ENCODE measurements at regions of chr15 and their contacts with region 1.

Region 1: DNA sequence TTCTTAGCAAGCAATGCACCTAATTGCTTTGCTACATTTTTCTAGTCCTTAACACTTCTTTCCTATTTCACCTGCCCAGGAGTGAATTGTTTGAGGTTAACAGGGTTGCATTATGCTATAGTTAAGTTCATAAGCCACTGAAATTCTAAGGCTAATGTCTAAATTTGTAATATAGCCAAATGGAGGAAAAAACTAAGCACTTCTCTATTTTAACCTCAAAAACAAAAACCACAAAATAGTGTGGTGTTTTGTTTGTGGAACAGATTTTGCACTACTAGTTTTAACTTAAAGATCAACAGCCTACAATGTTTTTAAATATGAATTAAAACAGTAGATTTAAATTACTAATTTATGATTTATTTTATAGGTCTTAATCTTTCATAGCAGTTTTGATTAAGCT is 5.5 kb downstream of the ATOSA start:
- DNase-seq: no peak
- H3K4me3 ChIP-seq: no peak overlapping the region
- H3K4me3 Mint-ChIP-seq: peak overlapping the region in 3 of 7 donors; percentile 2 to 24 (median 7)
- H3K27ac ChIP-seq: no peak overlapping the region
- H3K27ac Mint-ChIP-seq: peak overlapping the region in 1 of 8 donors; percentile 43
- H3K4me1 ChIP-seq: peaks cover 18% of the 10 kb centered on the region
- H3K4me1 Mint-ChIP-seq: peaks cover 44 to 83% (median 82%) of the 10 kb centered on the region in 3 donors
- H3K27me3 ChIP-seq: no peaks in the 10 kb centered on the region
- H3K27me3 Mint-ChIP-seq: peaks cover 0 to 5% of the 10 kb centered on the region in 2 donors

Region 2: DNA sequence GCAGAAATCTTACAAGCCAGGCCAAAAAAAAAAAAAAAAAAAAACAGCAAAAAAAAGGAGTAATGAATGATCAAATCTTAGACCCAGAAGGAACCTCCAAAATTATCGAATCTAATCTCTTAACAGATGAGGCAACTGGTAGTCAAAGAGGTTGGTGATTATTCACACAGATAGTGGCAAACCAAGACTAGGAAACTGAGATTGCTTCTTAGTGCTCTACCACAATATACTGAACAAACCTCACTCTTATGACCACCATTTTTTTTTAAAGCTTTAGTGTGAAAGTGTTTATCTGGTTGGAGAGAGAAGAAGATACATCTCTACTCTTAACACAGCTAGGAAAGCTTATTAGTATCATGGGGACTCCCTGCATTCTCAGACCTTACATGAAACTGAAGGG is 11.8 kb before region 1 on chr15:
- CTCF ChIA-PET with region 1: interaction called, 5 read pairs
- POLR2A ChIA-PET with region 1: interaction called, 14 read pairs
- DNase-seq: no peak
- H3K4me3 ChIP-seq: no peak overlapping the region
- H3K4me3 Mint-ChIP-seq: no peak overlapping the region
- H3K27ac ChIP-seq: no peak overlapping the region
- H3K27ac Mint-ChIP-seq: peak overlapping the region in 6 of 8 donors; percentile 14 to 72 (median 51)
- H3K4me1 ChIP-seq: peaks cover 4% of the 10 kb centered on the region
- H3K4me1 Mint-ChIP-seq: peaks cover 52 to 76% (median 73%) of the 10 kb centered on the region in 3 donors
- H3K27me3 ChIP-seq: no peaks in the 10 kb centered on the region
- H3K27me3 Mint-ChIP-seq: no peaks in the 10 kb centered on the region

Measured in CD8-positive, alpha-beta memory T cell (primary cell).